HCT116 (cell line): ENCODE measurements at regions of chrX and their contacts with region 1.

Region 1: GRCh38 chrX:116204932-116205331 is 34.4 kb downstream of the AGTR2 start:
- DNase-seq: peak; percentile 7
- ATAC-seq: no peak; the same call in 1 of the 2 replicates
- H3K4me3 ChIP-seq: no peak overlapping the region
- H3K27ac ChIP-seq: no peak overlapping the region
- H3K4me1 ChIP-seq: no peaks in the 10 kb centered on the region
- H3K27me3 ChIP-seq: no peaks in the 10 kb centered on the region
- CTCF ChIP-seq: peak; percentile 35 to 64 (median 45); a peak in 5 of 6 replicates
- POLR2A ChIP-seq: no peak
- RAD21 ChIP-seq: peak; percentile 71

Region 2: DNA sequence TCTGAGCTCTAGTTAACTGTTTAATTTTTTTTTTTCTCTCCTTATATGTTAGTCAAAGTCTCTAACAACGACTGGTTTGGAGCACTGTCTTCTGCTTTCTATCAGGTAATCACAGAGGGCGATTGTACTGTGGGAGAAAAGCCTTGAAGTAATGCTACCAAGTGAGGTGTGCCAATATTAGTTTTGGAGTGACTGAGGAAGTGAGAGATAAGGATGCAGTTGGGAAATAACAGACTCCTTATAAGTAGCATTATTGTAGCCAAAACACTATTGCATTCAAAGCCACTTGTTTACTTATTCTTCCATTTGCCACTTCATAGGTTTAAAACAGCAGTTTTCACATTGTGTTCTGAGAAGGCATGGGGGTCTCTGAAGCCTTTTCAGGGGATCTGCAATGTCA is 152.4 kb after region 1 on chrX:
- CTCF ChIA-PET with region 1: no interaction called
- POLR2A ChIA-PET with region 1: no interaction called
- RAD21 ChIA-PET with region 1: no interaction called
- intact Hi-C with region 1: no loop called
- DNase-seq: no peak
- ATAC-seq: no peak
- H3K4me3 ChIP-seq: no peak overlapping the region
- H3K27ac ChIP-seq: no peak overlapping the region
- H3K4me1 ChIP-seq: no peaks in the 10 kb centered on the region
- H3K27me3 ChIP-seq: no peaks in the 10 kb centered on the region
- CTCF ChIP-seq: no peak
- POLR2A ChIP-seq: no peak
- RAD21 ChIP-seq: no peak

Region 3: DNA sequence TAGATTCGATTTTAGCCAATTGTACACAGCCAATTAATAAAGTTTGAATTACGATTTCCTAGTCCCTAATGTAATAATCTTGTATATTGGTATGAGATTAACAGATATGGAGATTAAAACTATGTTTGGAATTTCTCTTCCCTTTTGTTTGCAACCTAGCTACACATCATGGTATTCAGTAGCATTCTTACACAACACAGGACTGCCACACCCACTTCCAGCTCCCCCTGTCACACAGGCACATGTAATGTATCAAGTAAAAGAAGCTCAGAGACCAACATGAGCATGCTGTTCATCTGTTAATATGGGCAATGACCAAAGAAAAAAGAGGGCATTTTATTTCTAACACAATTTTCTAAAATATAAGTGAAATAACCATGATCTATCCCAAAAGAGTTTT is 244.2 kb after region 1 on chrX:
- CTCF ChIA-PET with region 1: interaction called, 3 read pairs
- POLR2A ChIA-PET with region 1: no interaction called
- RAD21 ChIA-PET with region 1: no interaction called
- intact Hi-C with region 1: loop called (anchors 10 kb)
- DNase-seq: no peak
- ATAC-seq: no peak
- H3K4me3 ChIP-seq: no peak overlapping the region
- H3K27ac ChIP-seq: no peak overlapping the region
- H3K4me1 ChIP-seq: no peaks in the 10 kb centered on the region
- H3K27me3 ChIP-seq: no peaks in the 10 kb centered on the region
- CTCF ChIP-seq: no peak
- POLR2A ChIP-seq: no peak
- RAD21 ChIP-seq: no peak

Region 4: GRCh38 chrX:117985241-117985640 is 1780.3 kb after region 1 on chrX:
- CTCF ChIA-PET with region 1: no interaction called
- POLR2A ChIA-PET with region 1: no interaction called
- RAD21 ChIA-PET with region 1: no interaction called
- intact Hi-C with region 1: loop called (anchors 5 kb)
- DNase-seq: no peak
- ATAC-seq: no peak
- H3K4me3 ChIP-seq: no peak overlapping the region
- H3K27ac ChIP-seq: no peak overlapping the region
- H3K4me1 ChIP-seq: no peaks in the 10 kb centered on the region
- H3K27me3 ChIP-seq: no peaks in the 10 kb centered on the region
- CTCF ChIP-seq: peak in 2 of 3 experiments; percentile 12 to 23; a peak in 2 of 6 replicates
- POLR2A ChIP-seq: no peak
- RAD21 ChIP-seq: peak; percentile 22; the same call in 1 of the 2 replicates